ENCODE measurements at regions of chr9 and their contacts with region 1.

Region 1: GRCh38 chr9:98255578-98256296 is at the start of gene TBC1D2:
- DNase-seq: peak; percentile 92 to 94
- ATAC-seq: peak; percentile 85 to 94
- H3K4me3 ChIP-seq: peak within 1 kb of the TSS; percentile 79
- H3K27ac ChIP-seq: peak within 1 kb of the TSS; percentile 86 to 90
- H3K4me1 ChIP-seq: peaks cover 45% of the 10 kb centered on the region
- CTCF ChIP-seq: no peak
- EP300 ChIP-seq: no peak
- POLR2A ChIP-seq: peak; percentile 83
- RAD21 ChIP-seq: no peak
- polyA plus RNA-seq, gene TBC1D2: 3.3 and 4.1 TPM in 2 replicates

Region 2: GRCh38 chr9:98074115-98074990 is 181.4 kb before region 1 on chr9:
- CTCF ChIA-PET with region 1: interaction called, 11 read pairs
- POLR2A ChIA-PET with region 1: interaction called, 3 read pairs
- DNase-seq: peak; percentile 55 to 65
- ATAC-seq: peak; percentile 72 to 81
- H3K4me3 ChIP-seq: no peak overlapping the region
- H3K27ac ChIP-seq: peak overlapping the region; percentile 54 to 70; a peak in 5 of 6 replicates
- H3K4me1 ChIP-seq: peaks cover 28% of the 10 kb centered on the region
- CTCF ChIP-seq: peak; percentile 91
- EP300 ChIP-seq: no peak
- POLR2A ChIP-seq: no peak
- RAD21 ChIP-seq: peak; percentile 82 to 86

Region 3: GRCh38 chr9:98185611-98186171 is 70.0 kb before region 1 on chr9:
- CTCF ChIA-PET with region 1: no interaction called
- POLR2A ChIA-PET with region 1: no interaction called
- DNase-seq: no peak
- ATAC-seq: peak in 1 of 2 experiments; percentile 57; a peak in 4 of 6 replicates
- H3K4me3 ChIP-seq: no peak overlapping the region
- H3K27ac ChIP-seq: no peak overlapping the region
- H3K4me1 ChIP-seq: 0 out of 3 replicates have a peak, but pooled peaks cover 5% of the 10 kb centered on the region
- CTCF ChIP-seq: no peak
- EP300 ChIP-seq: no peak
- POLR2A ChIP-seq: no peak
- RAD21 ChIP-seq: no peak

Region 4: DNA sequence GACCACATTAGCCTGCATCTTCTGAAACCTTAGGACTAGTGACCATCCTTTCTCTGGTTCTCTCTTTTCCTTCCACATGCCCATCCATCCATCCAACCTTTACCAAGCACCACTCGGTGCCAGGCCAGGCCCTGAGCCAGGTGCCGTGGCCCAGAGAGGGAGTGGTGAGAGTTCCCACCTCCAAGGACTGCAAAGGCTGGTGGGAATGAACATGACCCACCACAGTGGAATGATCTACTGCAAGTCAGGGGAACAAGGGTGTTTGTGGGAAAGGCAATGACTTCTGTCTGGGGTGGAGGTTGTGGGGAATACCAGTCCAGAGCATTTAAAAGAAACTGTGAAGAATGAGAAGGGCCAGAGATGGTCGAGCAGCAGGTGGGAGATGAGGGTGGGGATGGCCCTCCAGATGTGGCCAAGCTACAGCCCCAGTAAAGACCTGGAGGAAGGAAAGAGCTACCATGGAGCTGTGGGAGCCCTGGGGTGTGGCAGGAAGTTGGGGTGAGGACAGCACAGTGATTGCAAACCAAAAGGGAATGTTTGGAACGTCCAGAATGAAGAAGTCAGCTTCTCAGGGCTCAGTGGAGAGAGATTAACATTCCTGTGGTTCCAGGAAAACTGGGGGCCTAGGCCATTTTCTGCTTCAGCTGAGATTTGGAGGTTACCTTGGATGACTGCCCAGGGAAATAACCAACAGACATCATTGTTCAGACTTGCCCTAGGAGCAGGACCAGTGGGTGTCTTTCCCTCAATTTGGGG is 32.7 kb before region 1 on chr9:
- CTCF ChIA-PET with region 1: interaction called, 19 read pairs
- POLR2A ChIA-PET with region 1: interaction called, 6 read pairs
- DNase-seq: peak; percentile 72 to 79
- ATAC-seq: peak; percentile 76 to 88
- H3K4me3 ChIP-seq: no peak overlapping the region
- H3K27ac ChIP-seq: peak overlapping the region; percentile 82 to 86
- H3K4me1 ChIP-seq: peaks cover 75% of the 10 kb centered on the region
- CTCF ChIP-seq: no peak
- EP300 ChIP-seq: peak in 1 of 2 experiments; percentile 61; a peak in 1 of 5 replicates
- POLR2A ChIP-seq: no peak
- RAD21 ChIP-seq: peak in 1 of 2 experiments; percentile 7; a peak in 1 of 5 replicates

Region 5: GRCh38 chr9:98287383-98287782 is 31.6 kb after region 1 on chr9:
- CTCF ChIA-PET with region 1: no interaction called
- POLR2A ChIA-PET with region 1: no interaction called
- DNase-seq: peak in 1 of 2 experiments; percentile 22
- ATAC-seq: peak in 1 of 2 experiments; percentile 63; a peak in 3 of 6 replicates
- H3K4me3 ChIP-seq: no peak overlapping the region
- H3K27ac ChIP-seq: no peak overlapping the region
- H3K4me1 ChIP-seq: no peaks in the 10 kb centered on the region
- CTCF ChIP-seq: no peak
- EP300 ChIP-seq: no peak
- POLR2A ChIP-seq: no peak
- RAD21 ChIP-seq: no peak

Measured in A549 (cell line).